ENCODE measurements at regions of chr16 and their contacts with region 1.

Region 1: GRCh38 chr16:5071681-5072333 is at the start of gene ALG1:
- DNase-seq: peak; percentile 89
- H3K4me3 Mint-ChIP-seq: peak within 1 kb of the TSS; percentile 91
- H3K27ac Mint-ChIP-seq: peak within 1 kb of the TSS; percentile 94
- H3K4me1 Mint-ChIP-seq: peaks cover 34% of the 10 kb centered on the region
- H3K27me3 Mint-ChIP-seq: no peaks in the 10 kb centered on the region
- total RNA-seq, gene ALG1: 18.7 to 19.3 TPM

Region 2: DNA sequence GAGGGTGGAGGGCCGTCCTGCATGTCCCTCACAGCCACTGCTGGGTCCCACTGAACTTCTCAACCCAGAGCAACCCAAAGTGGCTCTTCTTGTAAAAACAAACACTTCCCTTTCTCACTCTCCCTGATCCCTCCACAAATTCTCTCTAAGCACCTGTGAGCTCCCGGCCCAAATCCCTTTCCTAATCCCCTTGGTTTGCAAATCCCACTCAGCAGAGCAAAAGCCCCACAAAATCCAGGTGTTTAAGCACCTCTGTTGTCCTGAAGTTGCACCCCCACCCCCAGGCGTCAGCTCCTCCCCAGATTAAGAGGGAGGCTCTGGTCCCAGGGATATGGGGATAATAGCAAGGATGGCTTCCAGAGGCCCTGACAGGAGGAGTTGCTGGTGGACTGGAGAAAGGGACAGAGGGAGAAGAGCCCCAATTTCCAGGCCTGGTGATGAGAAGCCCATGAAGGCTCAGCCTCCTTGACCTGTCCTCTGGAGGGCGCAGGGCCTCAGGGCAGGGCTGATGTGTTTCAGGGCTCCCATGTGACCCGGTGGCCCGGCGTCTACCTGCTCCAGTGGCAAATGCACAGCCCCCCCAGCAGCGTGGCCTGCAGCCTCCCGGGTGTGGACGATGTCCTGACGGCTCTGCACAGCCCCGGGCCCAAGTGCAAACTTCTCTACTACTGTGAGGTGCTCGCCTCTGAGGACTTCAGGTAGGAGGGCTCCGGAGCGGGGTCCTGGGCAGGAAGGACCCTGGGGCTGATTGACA is 61.1 kb before region 1 on chr16:
- CTCF ChIA-PET with region 1: no interaction called
- POLR2A ChIA-PET with region 1: no interaction called
- DNase-seq: no peak
- H3K4me3 Mint-ChIP-seq: no peak overlapping the region
- H3K27ac Mint-ChIP-seq: no peak overlapping the region
- H3K4me1 Mint-ChIP-seq: no peaks in the 10 kb centered on the region
- H3K27me3 Mint-ChIP-seq: no peaks in the 10 kb centered on the region

Region 3: GRCh38 chr16:5033256-5034169 is 38.3 kb before region 1 on chr16 and contains the start of gene NAGPA:
- CTCF ChIA-PET with region 1: no interaction called
- POLR2A ChIA-PET with region 1: interaction called, 23 read pairs
- DNase-seq: peak; percentile 89
- H3K4me3 Mint-ChIP-seq: peak within 1 kb of the TSS; percentile 83
- H3K27ac Mint-ChIP-seq: peak within 1 kb of the TSS; percentile 64
- H3K4me1 Mint-ChIP-seq: peaks cover 19% of the 10 kb centered on the region
- H3K27me3 Mint-ChIP-seq: no peaks in the 10 kb centered on the region
- total RNA-seq, gene NAGPA: 12.5 to 12.8 TPM